ENCODE measurements at regions of chrX and their contacts with region 1.

Region 1: GRCh38 chrX:38654302-38654701 is 93.0 kb downstream of the TSPAN7 start:
- DNase-seq: no peak
- ATAC-seq: no peak
- H3K4me3 ChIP-seq: no peak overlapping the region
- H3K27ac ChIP-seq: peak overlapping the region; percentile 47 to 84 (median 64)
- H3K4me1 ChIP-seq: peaks cover 28% of the 10 kb centered on the region in 2 donors
- H3K27me3 ChIP-seq: no peaks in the 10 kb centered on the region
- CTCF ChIP-seq: peak; percentile 38 to 57 (median 45)
- POLR2A ChIP-seq: no peak

Region 2: GRCh38 chrX:38484607-38485498 is 169.4 kb before region 1 on chrX:
- in situ Hi-C with region 1: no loop called
- intact Hi-C with region 1: no loop called
- DNase-seq: no peak
- ATAC-seq: no peak
- H3K4me3 ChIP-seq: no peak overlapping the region
- H3K27ac ChIP-seq: no peak overlapping the region
- H3K4me1 ChIP-seq: no peaks in the 10 kb centered on the region
- H3K27me3 ChIP-seq: no peaks in the 10 kb centered on the region
- CTCF ChIP-seq: no peak
- POLR2A ChIP-seq: no peak

Region 3: GRCh38 chrX:38612281-38612680 is 42.0 kb before region 1 on chrX:
- in situ Hi-C with region 1: no loop called
- intact Hi-C with region 1: loop called (anchors 5 kb)
- DNase-seq: peak; percentile 50 to 64
- ATAC-seq: peak; percentile 92 to 94
- H3K4me3 ChIP-seq: peak overlapping the region; percentile 29 to 45 (median 40)
- H3K27ac ChIP-seq: peak overlapping the region; percentile 81 to 90 (median 88)
- H3K4me1 ChIP-seq: peaks cover 7 to 34% of the 10 kb centered on the region in 2 donors
- H3K27me3 ChIP-seq: no peaks in the 10 kb centered on the region
- CTCF ChIP-seq: no peak
- POLR2A ChIP-seq: peak; percentile 39 to 67

Measured in gastrocnemius medialis (tissue), 4 donors.